Naive thymus-derived CD4-positive, alpha-beta T cell (primary cell): ENCODE measurements at regions of chr3 and their contacts with region 1.

Region 1: GRCh38 chr3:113514265-113514769 is 639 bp downstream of the SPICE1 start:
- DNase-seq: no peak
- ATAC-seq: no peak
- H3K4me3 ChIP-seq: peak overlapping the region; percentile 99
- H3K4me3 Mint-ChIP-seq: no peak overlapping the region
- H3K27ac ChIP-seq: peak overlapping the region; percentile 87
- H3K27ac Mint-ChIP-seq: no peak overlapping the region
- H3K4me1 ChIP-seq: peaks cover 7 to 8% of the 10 kb centered on the region in 2 donors
- H3K4me1 Mint-ChIP-seq: peaks cover 6 to 30% (median 27%) of the 10 kb centered on the region in 7 donors
- H3K27me3 ChIP-seq: no peaks in the 10 kb centered on the region
- H3K27me3 Mint-ChIP-seq: peaks cover 10 to 29% (median 15%) of the 10 kb centered on the region in 5 donors

Region 2: GRCh38 chr3:113546414-113546893 is 32.1 kb after region 1 on chr3:
- CTCF ChIA-PET with region 1: no interaction called
- POLR2A ChIA-PET with region 1: interaction called, 3 read pairs
- intact Hi-C with region 1: loop called in 1 of 2 experiments (anchors 5 kb)
- DNase-seq: no peak
- ATAC-seq: no peak
- H3K4me3 ChIP-seq: no peak overlapping the region
- H3K4me3 Mint-ChIP-seq: peak overlapping the region in 4 of 10 donors; percentile 12 to 42 (median 26)
- H3K27ac ChIP-seq: no peak overlapping the region
- H3K27ac Mint-ChIP-seq: peak overlapping the region in 5 of 9 donors; percentile 5 to 67 (median 21)
- H3K4me1 ChIP-seq: no peaks in the 10 kb centered on the region
- H3K4me1 Mint-ChIP-seq: peaks cover 23 to 75% (median 68%) of the 10 kb centered on the region in 7 donors
- H3K27me3 ChIP-seq: no peaks in the 10 kb centered on the region
- H3K27me3 Mint-ChIP-seq: no peaks in the 10 kb centered on the region

Region 3: GRCh38 chr3:113575206-113575605 is 60.9 kb after region 1 on chr3:
- CTCF ChIA-PET with region 1: interaction called, 6 read pairs
- POLR2A ChIA-PET with region 1: interaction called, 9 read pairs
- intact Hi-C with region 1: loop called in 1 of 2 experiments (anchors 5 kb)
- DNase-seq: no peak
- ATAC-seq: no peak
- H3K4me3 ChIP-seq: no peak overlapping the region
- H3K4me3 Mint-ChIP-seq: no peak overlapping the region
- H3K27ac ChIP-seq: no peak overlapping the region
- H3K27ac Mint-ChIP-seq: peak overlapping the region in 8 of 9 donors; percentile 10 to 79 (median 66)
- H3K4me1 ChIP-seq: no peaks in the 10 kb centered on the region
- H3K4me1 Mint-ChIP-seq: peaks cover 3 to 21% (median 13%) of the 10 kb centered on the region in 7 donors
- H3K27me3 ChIP-seq: no peaks in the 10 kb centered on the region
- H3K27me3 Mint-ChIP-seq: no peaks in the 10 kb centered on the region

Region 4: GRCh38 chr3:113947372-113948014 is 433.2 kb after region 1 on chr3 and contains the start of gene ZDHHC23:
- CTCF ChIA-PET with region 1: no interaction called
- POLR2A ChIA-PET with region 1: no interaction called
- intact Hi-C with region 1: loop called in 1 of 2 experiments (anchors 5 kb)
- DNase-seq: peak; percentile 55 to 82 (median 69)
- ATAC-seq: peak; percentile 92
- H3K4me3 ChIP-seq: peak within 1 kb of the TSS; percentile 62
- H3K4me3 Mint-ChIP-seq: peak within 1 kb of the TSS; percentile 79 to 94 (median 86)
- H3K27ac ChIP-seq: peak within 1 kb of the TSS; percentile 42
- H3K27ac Mint-ChIP-seq: peak within 1 kb of the TSS in 7 of 9 donors; percentile 33 to 81 (median 59)
- H3K4me1 ChIP-seq: peaks cover 0 to 8% of the 10 kb centered on the region in 2 donors
- H3K4me1 Mint-ChIP-seq: peaks cover 8 to 20% (median 13%) of the 10 kb centered on the region in 7 donors
- H3K27me3 ChIP-seq: no peaks in the 10 kb centered on the region
- H3K27me3 Mint-ChIP-seq: peaks cover 9 to 60% (median 14%) of the 10 kb centered on the region in 5 donors
- total RNA-seq, gene ZDHHC23: 2.1 to 3.4 (median 3.2) TPM